Pancreas (tissue), 10 donors: ENCODE measurements at regions of chr4 and their contacts with region 1.

Region 1: DNA sequence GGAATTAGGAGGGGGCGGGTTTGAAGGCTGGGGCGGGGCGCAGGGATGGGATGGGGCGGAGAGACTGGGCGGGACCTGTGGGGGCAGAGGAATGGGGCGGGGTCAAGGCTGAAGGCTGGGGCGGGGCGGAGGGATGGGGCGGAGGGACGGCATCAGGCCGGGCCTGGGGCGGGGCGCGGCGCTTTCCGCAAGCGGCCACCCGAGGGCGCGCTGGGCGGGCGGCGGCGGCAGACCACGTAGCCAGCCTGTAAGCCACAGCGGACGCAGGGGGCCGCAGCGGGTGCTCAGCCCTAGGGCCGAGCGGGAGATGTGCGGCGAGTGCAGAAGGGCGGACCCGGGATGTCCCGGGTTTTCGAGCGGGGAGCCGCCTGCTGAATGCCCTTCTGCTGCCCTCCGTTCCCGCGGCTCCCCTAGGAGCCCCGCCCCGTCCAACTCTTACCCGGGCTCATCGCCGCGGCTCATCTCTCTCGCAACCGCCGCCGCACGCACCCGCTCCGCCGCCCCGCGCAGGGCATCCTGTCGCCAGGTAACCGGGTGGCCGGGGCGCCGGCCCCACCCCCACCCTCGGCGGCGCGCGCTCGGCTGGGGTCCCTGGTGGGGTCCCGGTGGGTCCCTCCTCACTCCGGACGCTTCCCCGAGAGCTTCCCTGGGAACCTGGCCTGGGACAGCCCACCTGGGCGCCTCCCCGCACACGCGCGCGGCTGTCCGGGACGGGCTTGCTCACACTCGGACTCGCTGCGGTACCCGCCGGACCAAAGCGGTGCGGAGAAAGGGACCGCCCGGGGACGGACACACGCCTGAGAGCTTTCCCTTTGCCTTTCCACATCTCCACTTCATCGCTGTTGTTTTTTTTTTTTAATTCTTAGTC is at the start of gene CCDC110:
- DNase-seq: peak; percentile 93 to 97 (median 96)
- ATAC-seq: peak; percentile 89 to 96 (median 92)
- H3K4me3 ChIP-seq: peak within 1 kb of the TSS; percentile 80 to 95 (median 87)
- H3K27ac ChIP-seq: peak within 1 kb of the TSS; percentile 55 to 77 (median 74)
- H3K4me1 ChIP-seq: peaks cover 0 to 4% (median 0%) of the 10 kb centered on the region in 3 donors
- H3K27me3 ChIP-seq: no peaks in the 10 kb centered on the region
- CTCF ChIP-seq: peak; percentile 45 to 63 (median 54)
- total RNA-seq, gene CCDC110: 11.2 to 25.8 (median 19.6) TPM

Region 2: GRCh38 chr4:185597532-185598188 is 126.2 kb after region 1 on chr4:
- intact Hi-C with region 1: loop called in 1 of 3 experiments (anchors 10 kb)
- DNase-seq: peak; percentile 59 to 87 (median 74)
- ATAC-seq: peak; percentile 64 to 90 (median 87)
- H3K4me3 ChIP-seq: no peak overlapping the region
- H3K27ac ChIP-seq: no peak overlapping the region
- H3K4me1 ChIP-seq: no peaks in the 10 kb centered on the region
- H3K27me3 ChIP-seq: no peaks in the 10 kb centered on the region
- CTCF ChIP-seq: peak; percentile 93 to 98 (median 96)